ENCODE measurements at regions of chr22 and their contacts with region 1.

Region 1: DNA sequence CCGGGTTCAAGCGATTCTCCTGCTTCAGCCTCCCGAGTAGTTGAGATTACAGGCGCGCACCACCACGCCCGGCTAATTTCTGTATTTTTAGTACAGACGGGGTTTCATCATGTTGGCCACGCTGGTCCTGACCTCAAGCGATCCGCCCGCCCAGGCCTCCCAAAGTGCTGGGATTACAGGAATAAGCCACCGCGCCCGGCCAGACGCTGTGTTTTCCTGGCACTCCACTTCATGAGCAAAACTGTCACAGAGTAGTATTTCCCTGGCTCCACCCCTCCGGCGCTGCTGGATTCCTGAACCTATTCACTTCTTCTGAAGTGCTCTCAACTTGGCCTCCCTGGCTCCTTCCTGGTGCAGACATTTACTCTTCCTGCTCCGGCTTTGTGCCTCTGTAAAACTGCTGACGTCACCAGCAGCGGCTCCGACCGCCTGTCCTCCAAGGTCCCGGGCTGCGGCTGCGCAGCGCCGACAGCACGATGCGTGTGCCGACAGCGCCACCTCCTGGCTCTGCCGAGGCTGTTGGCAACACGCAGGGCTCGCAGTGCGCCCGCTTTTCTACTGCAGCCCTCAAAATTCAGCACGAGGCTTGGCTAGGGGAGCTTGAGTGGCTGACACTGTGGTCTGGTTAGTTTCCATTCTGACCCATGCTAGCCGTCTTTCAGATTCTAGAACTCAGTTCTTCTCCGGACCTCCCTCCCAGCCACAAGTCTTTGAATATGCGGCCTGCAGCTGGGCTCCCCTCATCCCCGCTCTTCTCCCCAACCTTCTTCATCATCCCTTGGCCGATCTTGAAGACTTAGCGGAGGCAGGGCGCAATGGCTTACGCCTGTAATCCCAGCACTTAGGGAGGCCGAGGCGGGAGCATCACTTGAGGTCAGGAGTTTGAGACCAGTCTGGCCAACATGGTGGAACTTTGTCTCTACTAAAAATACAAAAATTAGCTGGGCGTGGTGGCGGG is 36.6 kb downstream of the APOL3 start:
- DNase-seq: peak; percentile 95
- H3K4me3 Mint-ChIP-seq: peak overlapping the region; percentile 69
- H3K27ac Mint-ChIP-seq: peak overlapping the region; percentile 86
- H3K4me1 Mint-ChIP-seq: peaks cover 14% of the 10 kb centered on the region
- H3K27me3 Mint-ChIP-seq: no peaks in the 10 kb centered on the region

Region 2: DNA sequence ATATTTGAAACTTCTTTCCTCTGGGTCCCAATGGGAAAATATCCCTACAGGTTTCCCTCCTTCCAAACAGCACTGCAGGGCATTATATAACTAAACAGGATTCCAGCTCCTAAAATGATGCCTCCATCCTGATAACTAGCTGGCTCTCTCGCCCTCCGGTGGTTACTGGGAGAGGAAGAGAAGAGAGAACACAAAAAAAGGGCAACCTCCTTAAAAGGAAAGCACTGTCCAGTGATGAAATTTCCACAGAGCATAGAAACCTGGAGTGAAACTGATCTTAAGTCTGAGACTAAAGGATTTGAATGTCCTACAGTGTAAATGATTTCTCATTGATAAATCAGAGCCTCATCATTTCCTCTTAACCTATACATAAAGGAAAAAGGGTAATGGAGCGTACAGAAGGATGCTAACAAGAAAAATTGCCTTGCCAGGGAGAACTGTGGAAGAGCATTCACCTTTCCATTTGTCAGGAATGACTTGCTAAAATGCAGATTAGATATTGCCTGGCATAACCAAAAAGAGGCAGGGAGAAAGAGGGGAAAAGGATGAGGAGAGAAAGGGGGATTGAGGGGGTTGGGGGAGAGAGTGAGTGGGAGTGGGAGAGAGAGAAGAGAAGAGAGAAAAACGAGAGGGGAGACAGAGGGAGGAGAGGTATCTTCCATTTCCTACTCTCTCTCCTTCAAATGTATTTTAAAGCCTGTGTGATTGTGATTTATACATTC is 284.9 kb before region 1 on chr22:
- CTCF ChIA-PET with region 1: no interaction called
- intact Hi-C with region 1: loop called (anchors 10 kb)
- DNase-seq: peak; percentile 51
- H3K4me3 Mint-ChIP-seq: no peak overlapping the region
- H3K27ac Mint-ChIP-seq: no peak overlapping the region
- H3K4me1 Mint-ChIP-seq: peaks cover 27% of the 10 kb centered on the region
- H3K27me3 Mint-ChIP-seq: peaks cover 8% of the 10 kb centered on the region

Region 3: DNA sequence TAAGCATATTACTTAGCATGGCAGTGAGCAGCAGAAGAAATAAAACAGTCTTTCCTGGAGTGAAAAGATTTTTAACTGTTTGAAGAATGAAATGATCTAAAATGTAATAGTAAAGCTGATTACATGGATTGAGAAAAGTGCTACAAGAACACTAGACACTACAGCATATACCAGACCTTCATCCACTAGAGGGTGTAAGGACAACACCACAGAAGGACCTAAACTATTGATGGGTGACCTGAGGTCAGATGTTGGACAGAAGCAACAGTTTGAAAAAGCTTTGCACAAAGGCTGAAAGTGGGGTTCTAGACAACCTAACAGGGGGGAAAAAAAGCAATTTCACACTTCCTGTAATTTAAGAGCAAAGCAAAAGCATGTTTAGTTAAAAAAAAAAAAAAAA is 193.0 kb before region 1 on chr22:
- CTCF ChIA-PET with region 1: interaction called, 6 read pairs
- intact Hi-C with region 1: loop called (anchors 5 kb)
- DNase-seq: no peak
- H3K4me3 Mint-ChIP-seq: no peak overlapping the region
- H3K27ac Mint-ChIP-seq: no peak overlapping the region
- H3K4me1 Mint-ChIP-seq: no peaks in the 10 kb centered on the region
- H3K27me3 Mint-ChIP-seq: no peaks in the 10 kb centered on the region